ENCODE measurements at regions of chr22 and their contacts with region 1.

Region 1: DNA sequence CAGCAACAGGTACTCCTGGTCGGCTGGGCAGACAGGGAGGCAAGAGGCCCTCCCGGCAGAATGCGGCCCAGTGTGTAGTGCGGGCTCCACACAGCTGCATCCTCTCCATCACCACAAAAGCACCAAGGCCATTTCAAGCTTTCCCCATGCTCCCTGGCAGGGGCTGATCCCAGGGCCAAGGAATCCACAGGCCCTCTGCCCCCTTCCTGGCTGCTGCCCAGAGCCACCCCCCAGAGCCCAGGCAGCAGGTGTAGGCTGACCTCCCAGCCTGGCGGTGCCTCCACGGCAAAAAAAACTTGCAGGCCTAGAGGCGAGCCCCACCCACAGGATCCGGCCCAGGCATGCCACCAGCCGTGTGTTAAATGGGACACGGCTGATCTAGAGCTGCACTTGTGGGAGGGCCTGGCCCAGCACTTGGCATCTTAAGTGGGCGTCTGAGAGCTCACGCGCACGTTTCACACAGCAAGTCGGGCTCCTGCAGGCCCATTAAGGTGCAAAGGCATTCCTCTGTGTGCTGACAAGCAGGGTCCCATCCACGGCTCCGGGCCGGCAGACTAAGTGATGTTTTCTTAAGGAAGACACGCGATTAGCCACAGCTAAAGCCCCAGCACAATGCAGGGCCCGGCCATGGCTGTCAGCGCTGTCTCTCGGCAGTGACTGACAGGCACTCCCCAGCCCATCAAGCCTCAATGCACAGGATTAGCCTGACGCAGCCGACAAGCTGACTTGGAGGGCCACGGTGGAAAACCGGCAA is 19.8 kb upstream of the GNB1L start:
- DNase-seq: peak; percentile 7 to 64
- H3K4me3 ChIP-seq: no peak overlapping the region
- H3K27ac ChIP-seq: peak overlapping the region; percentile 49 to 54
- H3K4me1 ChIP-seq: peaks cover 16 to 20% of the 10 kb centered on the region in 2 donors
- H3K27me3 ChIP-seq: no peaks in the 10 kb centered on the region
- CTCF ChIP-seq: no peak

Region 2: GRCh38 chr22:19844377-19845053 is 30.0 kb before region 1 on chr22:
- intact Hi-C with region 1: loop called (anchors 5 kb)
- DNase-seq: peak in 1 of 2 donors; percentile 87
- H3K4me3 ChIP-seq: peak overlapping the region in 1 of 2 donors; percentile 21
- H3K27ac ChIP-seq: peak overlapping the region; percentile 70 to 84
- H3K4me1 ChIP-seq: peaks cover 11 to 21% of the 10 kb centered on the region in 2 donors
- H3K27me3 ChIP-seq: no peaks in the 10 kb centered on the region
- CTCF ChIP-seq: peak in 1 of 3 experiments; percentile 10

Region 3: GRCh38 chr22:19854778-19855503 is 19.5 kb before region 1 on chr22 and contains the starts of genes GNB1L and RTL10:
- intact Hi-C with region 1: no loop called
- DNase-seq: peak; percentile 82 to 98
- H3K4me3 ChIP-seq: peak within 1 kb of the TSS; percentile 72 to 73
- H3K27ac ChIP-seq: peak within 1 kb of the TSS; percentile 91 to 94
- H3K4me1 ChIP-seq: peaks cover 14% of the 10 kb centered on the region in 2 donors
- H3K27me3 ChIP-seq: no peaks in the 10 kb centered on the region
- CTCF ChIP-seq: peak in 2 of 3 experiments; percentile 13 to 20
- total RNA-seq, gene GNB1L: 7.9 TPM
- total RNA-seq, gene RTL10: 8.8 TPM